ENCODE measurements at regions of chrX and their contacts with region 1.

Region 1: DNA sequence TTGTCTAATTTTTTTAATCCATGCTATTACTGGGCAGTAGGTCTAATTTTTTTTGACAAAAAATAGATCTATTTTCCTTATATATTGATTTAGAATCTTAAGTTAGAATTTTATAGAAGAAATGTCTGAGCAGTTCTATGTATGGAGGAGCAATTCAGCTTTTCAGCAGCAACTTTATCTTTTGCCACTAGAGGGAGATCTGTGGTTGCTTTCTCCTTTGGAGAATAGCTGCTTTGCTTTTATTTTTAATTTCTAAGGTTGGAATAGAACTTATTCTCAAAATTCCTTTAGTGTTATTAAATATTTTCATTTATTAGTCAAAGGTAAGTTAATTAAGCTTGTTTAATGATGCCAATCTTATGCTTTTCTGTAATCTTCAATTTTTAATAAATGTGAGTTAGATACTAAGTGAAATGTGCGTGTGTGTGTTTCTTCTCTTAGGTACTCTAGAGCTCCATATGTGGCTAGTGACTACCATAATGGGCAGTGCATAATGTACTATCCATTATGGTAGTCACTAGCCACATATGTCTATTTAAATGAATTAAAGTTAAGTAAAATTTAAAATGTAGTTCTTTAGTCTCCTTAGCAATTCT is 29.3 kb downstream of the FAM199X start:
- DNase-seq: no peak
- H3K4me3 ChIP-seq: no peak overlapping the region
- H3K27ac ChIP-seq: no peak overlapping the region
- H3K4me1 ChIP-seq: no peaks in the 10 kb centered on the region
- H3K27me3 ChIP-seq: no peaks in the 10 kb centered on the region
- CTCF ChIP-seq: peak in 2 of 3 experiments; percentile 77 to 82

Region 2: GRCh38 chrX:104156630-104157529 is 38.7 kb before region 1 on chrX and contains the start of gene SLC25A53:
- intact Hi-C with region 1: no loop called
- DNase-seq: peak; percentile 28 to 85
- H3K4me3 ChIP-seq: peak within 1 kb of the TSS; percentile 37 to 77
- H3K27ac ChIP-seq: peak within 1 kb of the TSS; percentile 90 to 93
- H3K4me1 ChIP-seq: no peaks in the 10 kb centered on the region
- H3K27me3 ChIP-seq: no peaks in the 10 kb centered on the region
- CTCF ChIP-seq: no peak
- total RNA-seq, gene SLC25A53: 3.1 TPM

Region 3: DNA sequence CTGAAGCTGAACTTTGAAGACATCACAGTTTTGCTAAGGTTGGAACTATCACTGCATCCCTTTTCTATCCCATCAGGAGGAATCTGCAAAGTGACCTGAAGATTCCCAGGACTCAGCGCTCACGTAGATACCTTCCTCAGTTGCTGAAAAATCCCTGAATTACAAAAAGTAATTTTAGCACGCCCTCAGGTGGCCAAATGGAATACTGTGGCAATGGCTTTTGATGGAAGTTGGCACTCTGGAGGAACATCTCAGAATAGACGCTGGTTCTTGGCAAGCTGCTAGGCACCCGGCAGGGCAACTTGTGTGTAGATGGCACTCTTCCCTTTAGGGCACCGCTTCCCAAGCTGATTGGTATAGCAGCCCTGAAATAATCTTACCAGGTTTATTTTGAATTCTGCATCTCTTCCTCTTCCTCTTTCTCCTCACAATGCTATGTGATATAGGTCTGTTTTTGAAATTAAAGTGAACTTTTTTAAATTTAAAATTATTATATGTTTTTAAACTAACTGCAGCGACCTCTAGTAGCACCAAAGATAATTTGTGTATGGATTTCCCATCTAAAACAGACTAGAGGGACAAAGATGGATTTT is 75.4 kb after region 1 on chrX:
- intact Hi-C with region 1: loop called (anchors 5 kb)
- DNase-seq: peak in 1 of 2 donors; percentile 70
- H3K4me3 ChIP-seq: no peak overlapping the region
- H3K27ac ChIP-seq: no peak overlapping the region
- H3K4me1 ChIP-seq: no peaks in the 10 kb centered on the region
- H3K27me3 ChIP-seq: no peaks in the 10 kb centered on the region
- CTCF ChIP-seq: peak in 2 of 3 experiments; percentile 45 to 61

Region 4: DNA sequence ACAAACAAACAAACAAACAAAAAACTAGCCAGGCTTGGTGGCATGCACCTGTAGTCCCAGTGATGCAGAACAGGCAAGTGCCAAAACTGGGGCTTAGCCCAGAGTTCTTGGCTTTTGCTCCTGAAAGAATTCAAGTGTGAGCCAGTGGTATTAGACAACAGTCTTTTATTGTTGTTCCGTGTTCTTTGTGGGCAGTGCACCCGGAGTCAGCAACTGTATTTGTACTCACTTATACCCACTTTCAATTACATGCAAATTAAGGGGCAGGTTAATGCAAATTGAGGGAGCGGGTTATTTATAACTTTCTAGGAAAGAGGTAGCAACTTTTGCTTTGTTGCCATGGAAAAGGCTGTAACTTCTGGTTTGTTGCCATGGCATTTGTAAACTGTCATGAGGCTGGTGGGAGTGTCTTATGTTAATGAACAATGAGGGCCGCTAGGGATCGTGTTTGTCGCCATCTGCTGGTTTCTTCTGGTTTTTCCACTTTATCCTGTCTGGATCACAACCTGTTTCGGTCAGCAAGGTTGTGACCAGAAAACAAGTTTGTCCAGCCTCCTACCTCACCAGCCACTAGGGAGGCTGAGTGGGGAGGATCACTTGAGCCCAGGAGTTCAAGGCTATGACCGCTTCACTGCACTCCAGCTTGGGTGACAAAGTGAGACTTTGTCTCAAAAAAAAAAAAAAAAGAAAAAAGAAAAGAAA is 148.0 kb after region 1 on chrX:
- intact Hi-C with region 1: loop called (anchors 5 kb)
- DNase-seq: no peak
- H3K4me3 ChIP-seq: no peak overlapping the region
- H3K27ac ChIP-seq: no peak overlapping the region
- H3K4me1 ChIP-seq: no peaks in the 10 kb centered on the region
- H3K27me3 ChIP-seq: no peaks in the 10 kb centered on the region
- CTCF ChIP-seq: peak in 2 of 3 experiments; percentile 38 to 43

Measured in ascending aorta (tissue), 2 donors.